Activated CD8-positive, alpha-beta memory T cell treated with anti-CD3 and anti-CD28 coated beads, Interleukin-2, amount 10 ng/mL, durations not matched to agents 7 days and 5 days (primary cell): ENCODE measurements at regions of chr3 and their contacts with region 1.

Region 1: GRCh38 chr3:130093741-130094391 is 12.2 kb downstream of the ALG1L2 start:
- DNase-seq: peak; percentile 71
- ATAC-seq: peak; percentile 39
- H3K4me3 Mint-ChIP-seq: peak overlapping the region; percentile 43
- H3K27ac Mint-ChIP-seq: peak overlapping the region; percentile 78
- H3K4me1 Mint-ChIP-seq: peaks cover 39% of the 10 kb centered on the region
- H3K27me3 Mint-ChIP-seq: no peaks in the 10 kb centered on the region

Region 2: DNA sequence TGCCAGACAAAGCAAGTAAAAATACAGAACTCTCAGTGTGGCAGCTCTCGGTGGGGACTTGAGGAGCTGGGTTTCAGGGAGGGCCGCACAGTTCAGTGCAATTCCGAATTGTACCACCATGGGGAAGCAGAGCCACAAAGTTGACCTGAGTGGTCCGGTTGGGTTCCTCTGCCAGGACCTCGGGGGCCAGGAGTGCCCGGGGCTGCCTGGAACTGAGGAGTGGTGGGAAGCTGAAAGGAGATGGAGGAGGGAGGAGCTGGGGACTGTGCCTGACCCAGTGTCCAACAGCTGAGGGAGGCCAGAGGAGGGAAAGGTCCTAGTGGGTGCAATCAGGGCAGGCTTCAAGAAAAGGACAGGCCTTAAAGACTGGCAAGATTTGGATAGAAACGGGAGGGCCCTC is 151.6 kb before region 1 on chr3:
- CTCF ChIA-PET with region 1: interaction called, 49 read pairs
- DNase-seq: peak; percentile 60
- ATAC-seq: peak; percentile 79
- H3K4me3 Mint-ChIP-seq: no peak overlapping the region
- H3K27ac Mint-ChIP-seq: no peak overlapping the region
- H3K4me1 Mint-ChIP-seq: no peaks in the 10 kb centered on the region
- H3K27me3 Mint-ChIP-seq: peaks cover 7% of the 10 kb centered on the region

Region 3: GRCh38 chr3:130111185-130111864 is 17.5 kb after region 1 on chr3:
- CTCF ChIA-PET with region 1: interaction called, 17 read pairs
- DNase-seq: peak; percentile 99
- ATAC-seq: peak; percentile 100
- H3K4me3 Mint-ChIP-seq: peak overlapping the region; percentile 91
- H3K27ac Mint-ChIP-seq: peak overlapping the region; percentile 100
- H3K4me1 Mint-ChIP-seq: peaks cover 25% of the 10 kb centered on the region
- H3K27me3 Mint-ChIP-seq: no peaks in the 10 kb centered on the region